Activated CD8-positive, alpha-beta memory T cell treated with anti-CD3 and anti-CD28 coated beads, Interleukin-2, amount 10 ng/mL, durations not matched to agents 7 days and 5 days (primary cell): ENCODE measurements at regions of chr19 and their contacts with region 1.

Region 1: DNA sequence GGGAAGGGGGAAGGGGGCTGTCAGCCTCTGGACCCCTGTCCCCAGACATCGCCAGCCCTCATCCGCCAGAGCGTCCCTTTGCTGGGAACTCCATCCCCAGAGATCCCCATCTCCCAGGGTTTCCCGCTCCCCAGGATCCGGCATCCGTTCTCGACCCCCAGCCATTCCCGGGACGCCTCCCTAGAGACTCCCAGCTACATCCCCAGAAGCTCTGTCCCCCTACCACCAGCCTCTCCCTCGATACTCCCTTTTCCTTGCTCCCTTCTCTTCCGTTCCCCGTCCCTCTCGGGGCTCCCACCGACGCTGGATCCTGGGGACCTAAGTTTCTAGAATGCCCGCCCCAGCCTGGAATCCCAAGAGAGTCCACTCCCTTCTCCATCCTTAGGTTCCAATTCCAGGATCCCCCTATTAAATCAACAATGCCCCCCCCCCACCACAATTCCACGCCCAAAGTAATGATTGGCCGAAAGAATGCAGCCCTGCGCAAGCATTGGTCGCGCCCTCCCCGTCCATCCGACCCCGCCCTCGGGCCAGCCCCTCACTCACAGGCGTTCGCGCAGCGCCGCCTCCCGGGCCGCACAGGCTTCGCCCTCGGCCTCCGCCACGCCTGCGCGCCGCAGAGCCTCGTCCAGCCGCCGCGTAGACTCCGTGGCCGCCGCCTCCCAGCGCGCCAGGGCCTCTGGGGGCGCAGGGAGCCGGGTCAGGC is 3.2 kb downstream of the CCDC194 start:
- DNase-seq: peak; percentile 90
- ATAC-seq: peak; percentile 99
- H3K4me3 Mint-ChIP-seq: peak overlapping the region; percentile 77
- H3K27ac Mint-ChIP-seq: no peak overlapping the region
- H3K4me1 Mint-ChIP-seq: peaks cover 27% of the 10 kb centered on the region
- H3K27me3 Mint-ChIP-seq: peaks cover 33% of the 10 kb centered on the region

Region 2: GRCh38 chr19:17292286-17293097 is 98.3 kb before region 1 on chr19:
- CTCF ChIA-PET with region 1: interaction called, 92 read pairs
- DNase-seq: peak; percentile 88
- ATAC-seq: peak; percentile 95
- H3K4me3 Mint-ChIP-seq: peak overlapping the region; percentile 81
- H3K27ac Mint-ChIP-seq: peak overlapping the region; percentile 82
- H3K4me1 Mint-ChIP-seq: peaks cover 14% of the 10 kb centered on the region
- H3K27me3 Mint-ChIP-seq: peaks cover 3% of the 10 kb centered on the region

Region 3: DNA sequence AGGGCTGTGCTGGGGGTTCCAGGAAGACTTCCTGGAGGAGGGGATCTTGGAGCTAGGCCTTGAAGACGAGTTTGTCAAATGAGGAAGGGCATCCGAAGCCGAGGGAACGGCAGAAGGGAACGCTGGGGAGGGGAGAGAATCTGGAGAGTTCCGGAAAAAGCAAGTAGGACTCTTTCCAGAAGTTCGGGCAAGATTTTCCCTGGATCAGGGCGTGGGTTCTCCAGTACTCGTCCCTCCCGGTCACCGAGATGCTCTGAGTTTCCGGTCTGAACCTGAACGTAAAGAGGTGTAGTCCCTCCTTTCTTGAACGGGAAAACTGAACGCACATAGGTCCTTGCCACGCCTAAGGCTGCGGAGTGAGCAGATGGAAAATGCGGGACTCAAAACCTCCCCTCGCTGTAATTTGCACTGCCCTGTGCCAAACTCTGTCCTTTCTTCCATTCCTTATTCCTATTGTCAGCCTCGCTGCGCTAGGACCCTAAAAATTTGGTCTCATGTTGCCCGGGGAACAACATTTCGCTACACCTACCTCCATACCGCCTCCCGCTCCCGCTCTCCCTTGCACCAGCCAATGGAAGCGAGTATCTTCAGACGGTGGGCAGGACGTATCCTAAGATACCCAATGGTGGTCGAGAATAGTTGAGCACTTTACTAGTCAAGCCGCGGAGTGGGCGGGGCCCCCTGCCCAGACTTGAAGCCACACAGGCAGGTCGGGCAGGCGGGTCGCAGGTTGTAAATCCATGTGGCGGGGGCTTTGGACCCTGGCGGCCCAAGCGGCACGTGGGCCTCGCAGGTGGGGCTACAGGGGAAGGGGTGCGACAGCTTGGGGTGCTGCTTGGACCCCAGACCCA is 53.7 kb before region 1 on chr19 and contains the start of gene GTPBP3:
- CTCF ChIA-PET with region 1: interaction called, 16 read pairs
- DNase-seq: peak; percentile 99
- ATAC-seq: peak; percentile 89
- H3K4me3 Mint-ChIP-seq: peak within 1 kb of the TSS; percentile 90
- H3K27ac Mint-ChIP-seq: peak within 1 kb of the TSS; percentile 92
- H3K4me1 Mint-ChIP-seq: peaks cover 42% of the 10 kb centered on the region
- H3K27me3 Mint-ChIP-seq: no peaks in the 10 kb centered on the region
- total RNA-seq, gene GTPBP3: 40.4 to 44.4 TPM

Region 4: GRCh38 chr19:17376935-17377600 is 13.8 kb before region 1 on chr19 and contains the start of gene PLVAP:
- CTCF ChIA-PET with region 1: interaction called, 12 read pairs
- DNase-seq: no peak
- ATAC-seq: no peak
- H3K4me3 Mint-ChIP-seq: no peak within 1 kb of the TSS
- H3K27ac Mint-ChIP-seq: no peak within 1 kb of the TSS
- H3K4me1 Mint-ChIP-seq: peaks cover 2% of the 10 kb centered on the region
- H3K27me3 Mint-ChIP-seq: peaks cover 8% of the 10 kb centered on the region
- total RNA-seq, gene PLVAP: not detected

Region 5: DNA sequence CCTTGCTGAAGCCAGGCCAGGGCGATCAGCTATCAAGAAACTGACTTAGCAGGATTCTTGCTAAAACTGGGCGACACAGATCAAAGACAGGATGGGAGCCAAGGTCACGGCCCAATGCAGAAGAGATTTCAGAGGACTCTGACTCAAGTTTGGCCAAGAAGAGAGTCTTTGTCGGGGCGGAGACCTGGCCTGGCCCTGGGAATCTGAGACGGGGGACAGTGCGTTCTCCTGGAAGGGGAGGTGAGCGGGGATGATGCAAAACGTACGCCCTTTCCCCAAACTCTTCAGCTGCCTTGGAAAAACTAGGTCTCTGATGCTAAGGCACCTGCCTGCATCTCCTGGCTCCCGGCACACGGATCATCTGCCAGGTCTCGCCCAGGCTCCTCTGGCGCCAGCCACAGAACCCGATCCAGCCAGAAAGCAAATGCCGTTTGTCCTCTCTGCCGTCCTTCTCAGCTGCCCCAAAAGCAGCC is 38.9 kb after region 1 on chr19:
- CTCF ChIA-PET with region 1: no interaction called
- DNase-seq: no peak
- ATAC-seq: no peak
- H3K4me3 Mint-ChIP-seq: no peak overlapping the region
- H3K27ac Mint-ChIP-seq: no peak overlapping the region
- H3K4me1 Mint-ChIP-seq: peaks cover 2% of the 10 kb centered on the region
- H3K27me3 Mint-ChIP-seq: no peaks in the 10 kb centered on the region